ENCODE measurements at regions of chr13 and their contacts with region 1.

Region 1: GRCh38 chr13:29850224-29850898 is at the start of gene UBL3:
- DNase-seq: peak; percentile 84
- ATAC-seq: peak; percentile 90
- H3K4me3 Mint-ChIP-seq: peak within 1 kb of the TSS; percentile 96
- H3K27ac Mint-ChIP-seq: peak within 1 kb of the TSS; percentile 99
- H3K4me1 Mint-ChIP-seq: peaks cover 33% of the 10 kb centered on the region
- H3K27me3 Mint-ChIP-seq: no peaks in the 10 kb centered on the region
- CTCF ChIP-seq: no peak
- total RNA-seq, gene UBL3: 17.9 and 18.6 TPM in 2 replicates

Region 2: DNA sequence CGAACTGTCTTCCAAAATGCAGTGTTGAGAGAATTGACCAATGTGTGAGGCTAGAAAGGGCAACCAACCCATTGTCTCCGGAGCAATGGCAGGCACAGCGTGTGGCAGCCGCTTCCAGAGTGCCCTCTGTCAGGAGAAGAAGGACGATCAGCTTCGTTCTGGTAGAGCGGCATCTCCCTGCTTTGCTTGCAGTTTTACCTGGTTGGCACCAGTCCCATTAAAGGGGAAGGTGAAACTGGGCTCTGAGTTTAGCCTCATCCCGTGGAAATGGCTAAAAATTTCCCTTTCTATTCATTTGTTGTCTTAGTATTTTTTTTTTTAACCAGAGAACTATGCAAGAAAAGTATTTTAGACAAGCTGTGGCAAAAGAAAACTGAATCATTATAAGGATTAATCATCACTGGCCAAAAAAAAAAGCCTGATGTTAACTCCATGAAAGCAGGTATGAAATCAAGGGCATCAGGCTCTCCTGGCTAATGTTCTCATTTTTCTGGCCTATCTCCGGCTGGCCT is 173.4 kb before region 1 on chr13:
- CTCF ChIA-PET with region 1: no interaction called
- POLR2A ChIA-PET with region 1: no interaction called
- intact Hi-C with region 1: no loop called
- DNase-seq: no peak
- ATAC-seq: no peak
- H3K4me3 Mint-ChIP-seq: no peak overlapping the region
- H3K27ac Mint-ChIP-seq: no peak overlapping the region
- H3K4me1 Mint-ChIP-seq: no peaks in the 10 kb centered on the region
- H3K27me3 Mint-ChIP-seq: peaks cover 10% of the 10 kb centered on the region
- CTCF ChIP-seq: no peak

Region 3: GRCh38 chr13:29771247-29771646 is 79.1 kb before region 1 on chr13:
- CTCF ChIA-PET with region 1: interaction called, 6 read pairs
- POLR2A ChIA-PET with region 1: interaction called, 11 read pairs
- intact Hi-C with region 1: loop called (anchors 1 kb)
- DNase-seq: no peak
- ATAC-seq: peak; percentile 49
- H3K4me3 Mint-ChIP-seq: no peak overlapping the region
- H3K27ac Mint-ChIP-seq: no peak overlapping the region
- H3K4me1 Mint-ChIP-seq: peaks cover 5% of the 10 kb centered on the region
- H3K27me3 Mint-ChIP-seq: no peaks in the 10 kb centered on the region
- CTCF ChIP-seq: peak; percentile 29

Region 4: DNA sequence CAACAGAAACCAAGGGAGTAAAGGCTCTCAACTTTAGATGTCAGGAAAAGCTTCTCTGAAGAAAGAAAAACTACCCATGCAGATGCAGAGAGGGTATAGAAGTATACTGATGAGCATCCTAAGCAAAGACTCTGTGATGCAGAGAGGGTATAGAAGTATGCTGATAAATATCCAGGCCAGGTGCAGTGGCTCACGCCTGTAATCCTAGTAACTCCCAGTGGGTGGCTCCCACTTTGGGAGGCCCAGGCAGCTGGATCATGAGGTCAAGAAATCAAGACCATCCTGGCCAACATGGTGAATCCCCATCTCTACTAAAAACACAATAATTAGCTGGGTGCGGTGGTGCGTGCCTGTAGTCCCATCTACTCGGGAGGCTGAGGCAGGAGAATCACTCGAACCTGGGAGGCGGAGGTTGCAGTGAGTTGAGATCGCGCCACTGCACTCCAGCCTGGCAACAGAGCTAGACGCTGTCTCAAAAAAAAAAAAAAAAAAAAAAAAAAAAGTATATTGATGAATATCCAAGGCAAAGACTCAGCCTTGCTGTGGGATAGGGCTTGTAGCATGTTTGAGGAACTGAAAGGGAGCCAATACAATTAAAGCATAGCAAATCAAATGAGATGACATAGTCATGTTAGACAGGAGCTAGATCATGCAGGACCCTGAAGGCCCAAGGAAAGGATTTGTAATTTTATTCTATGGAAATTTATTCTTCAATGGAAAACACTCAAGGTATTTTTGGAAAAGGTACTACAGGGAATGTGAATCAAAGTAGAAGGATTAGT is 14.9 kb before region 1 on chr13:
- CTCF ChIA-PET with region 1: interaction called, 7 read pairs
- POLR2A ChIA-PET with region 1: interaction called, 22 read pairs
- intact Hi-C with region 1: loop called (anchors 1 kb)
- DNase-seq: no peak
- ATAC-seq: peak; percentile 94
- H3K4me3 Mint-ChIP-seq: no peak overlapping the region
- H3K27ac Mint-ChIP-seq: no peak overlapping the region
- H3K4me1 Mint-ChIP-seq: peaks cover 56% of the 10 kb centered on the region
- H3K27me3 Mint-ChIP-seq: no peaks in the 10 kb centered on the region
- CTCF ChIP-seq: no peak

Region 5: GRCh38 chr13:30306762-30307193 is 456.4 kb after region 1 on chr13:
- CTCF ChIA-PET with region 1: no interaction called
- POLR2A ChIA-PET with region 1: interaction called, 4 read pairs
- intact Hi-C with region 1: loop called (anchors 1 kb)
- DNase-seq: peak; percentile 86
- ATAC-seq: peak; percentile 86
- H3K4me3 Mint-ChIP-seq: peak overlapping the region; percentile 90
- H3K27ac Mint-ChIP-seq: peak overlapping the region; percentile 85
- H3K4me1 Mint-ChIP-seq: peaks cover 72% of the 10 kb centered on the region
- H3K27me3 Mint-ChIP-seq: no peaks in the 10 kb centered on the region
- CTCF ChIP-seq: no peak

Measured in activated B cell treated with CpG ODN at 0.5 μM for 24 hours (primary cell).